ENCODE measurements at regions of chr5 and their contacts with region 1.

Region 1: GRCh38 chr5:72244862-72245371 is 75.1 kb downstream of the MRPS27 start:
- DNase-seq: no peak
- H3K4me3 ChIP-seq: no peak overlapping the region
- H3K27me3 ChIP-seq: no peaks in the 10 kb centered on the region
- CTCF ChIP-seq: peak; percentile 65

Region 2: DNA sequence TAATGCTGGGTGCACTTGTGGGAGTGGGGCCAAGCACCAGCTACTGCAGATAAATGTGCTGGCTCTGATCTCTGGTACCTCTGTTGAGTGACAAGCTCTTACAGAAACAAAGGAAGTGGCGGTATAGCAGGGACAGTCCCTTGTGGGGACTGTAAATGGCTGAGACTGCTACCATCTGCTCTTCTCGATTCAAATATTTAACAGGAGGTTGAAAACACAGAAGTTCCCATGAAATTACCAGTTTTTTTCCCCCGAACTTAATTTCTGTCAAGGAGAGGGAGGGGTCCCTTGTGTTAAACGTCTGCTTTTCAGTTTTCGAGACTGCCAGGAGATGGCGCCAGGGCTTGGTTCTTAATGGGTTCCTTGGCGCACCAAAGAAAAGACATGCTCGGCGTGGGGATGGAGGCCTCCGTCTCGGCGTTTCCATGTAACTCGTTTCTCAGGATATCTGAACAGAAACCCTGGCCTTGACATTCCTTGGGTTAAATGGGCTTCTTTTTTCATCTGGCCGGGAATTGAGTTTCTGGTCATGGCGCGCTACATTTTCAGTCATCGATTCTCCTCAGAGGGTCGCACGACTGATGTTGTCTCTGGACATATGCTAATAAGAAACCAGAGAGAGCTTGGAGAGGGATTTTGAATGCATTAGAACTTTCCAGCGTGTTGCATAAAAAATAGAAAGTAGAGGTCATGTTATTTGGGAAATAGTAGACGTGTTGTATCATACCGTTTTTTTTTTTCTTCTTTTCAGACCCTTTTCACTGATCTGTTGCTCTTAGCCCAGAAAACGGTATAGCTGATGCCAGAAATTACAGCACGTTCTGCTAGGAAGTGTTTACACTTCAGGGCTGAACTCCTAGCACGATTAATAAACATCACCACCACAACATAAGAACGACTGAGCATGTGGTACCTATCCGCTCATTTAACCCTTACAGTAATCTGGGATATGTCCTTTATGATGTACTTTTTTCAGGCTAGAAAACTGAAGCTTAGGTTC is 461.8 kb before region 1 on chr5:
- CTCF ChIA-PET with region 1: interaction called, 10 read pairs
- POLR2A ChIA-PET with region 1: no interaction called
- DNase-seq: no peak
- H3K4me3 ChIP-seq: peak overlapping the region; percentile 11; the same call in 1 of the 2 replicates
- H3K27me3 ChIP-seq: no peaks in the 10 kb centered on the region
- CTCF ChIP-seq: peak; percentile 84

Region 3: GRCh38 chr5:72231991-72232658 is 12.8 kb before region 1 on chr5:
- CTCF ChIA-PET with region 1: interaction called, 10 read pairs
- POLR2A ChIA-PET with region 1: no interaction called
- DNase-seq: no peak
- H3K4me3 ChIP-seq: no peak overlapping the region
- H3K27me3 ChIP-seq: no peaks in the 10 kb centered on the region
- CTCF ChIP-seq: no peak

Region 4: GRCh38 chr5:72256536-72256935 is 11.6 kb after region 1 on chr5:
- CTCF ChIA-PET with region 1: no interaction called
- POLR2A ChIA-PET with region 1: no interaction called
- DNase-seq: no peak
- H3K4me3 ChIP-seq: no peak overlapping the region
- H3K27me3 ChIP-seq: no peaks in the 10 kb centered on the region
- CTCF ChIP-seq: no peak

Region 5: GRCh38 chr5:73354406-73354805 is 1109.5 kb after region 1 on chr5:
- CTCF ChIA-PET with region 1: no interaction called
- POLR2A ChIA-PET with region 1: interaction called, 18 read pairs
- DNase-seq: no peak
- H3K4me3 ChIP-seq: no peak overlapping the region
- H3K27me3 ChIP-seq: no peaks in the 10 kb centered on the region; the same call in none of the 2 replicates
- CTCF ChIP-seq: no peak